Activated naive CD4-positive, alpha-beta T cell treated with anti-CD3 and anti-CD28 coated beads for 36 hours (primary cell): ENCODE measurements at regions of chr12 and their contacts with region 1.

Region 1: GRCh38 chr12:92208613-92209121 is 63.0 kb upstream of the BTG1 start:
- DNase-seq: peak; percentile 42
- H3K4me3 Mint-ChIP-seq: peak overlapping the region; percentile 66
- H3K27ac Mint-ChIP-seq: peak overlapping the region; percentile 86
- H3K4me1 Mint-ChIP-seq: peaks cover 45% of the 10 kb centered on the region
- H3K27me3 Mint-ChIP-seq: no peaks in the 10 kb centered on the region

Region 2: GRCh38 chr12:91577586-91578539 is 630.8 kb before region 1 on chr12:
- CTCF ChIA-PET with region 1: no interaction called
- intact Hi-C with region 1: loop called (anchors 1 kb)
- DNase-seq: no peak
- H3K4me3 Mint-ChIP-seq: peak overlapping the region; percentile 71
- H3K27ac Mint-ChIP-seq: peak overlapping the region; percentile 61
- H3K4me1 Mint-ChIP-seq: peaks cover 19% of the 10 kb centered on the region
- H3K27me3 Mint-ChIP-seq: no peaks in the 10 kb centered on the region

Region 3: DNA sequence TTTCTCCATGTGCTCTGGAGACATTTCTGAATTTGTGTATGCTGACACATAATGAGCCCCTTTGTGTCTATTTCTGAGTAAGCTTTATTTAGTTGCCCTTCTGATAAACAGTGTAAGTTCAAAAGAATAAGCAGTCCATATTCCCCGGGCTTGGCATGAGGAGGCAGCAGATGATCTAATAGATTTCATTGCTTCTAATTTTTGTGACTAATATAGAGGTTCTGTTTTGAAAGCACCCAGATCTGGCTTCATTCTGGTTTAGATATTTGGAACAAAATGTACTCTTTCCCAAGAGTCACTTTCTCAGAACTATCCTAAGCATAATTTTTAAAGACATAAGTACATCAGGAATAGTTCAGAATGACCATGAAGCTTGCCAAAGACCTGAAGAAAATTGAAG is 353.9 kb before region 1 on chr12:
- CTCF ChIA-PET with region 1: no interaction called
- intact Hi-C with region 1: loop called (anchors 5 kb)
- DNase-seq: no peak
- H3K4me3 Mint-ChIP-seq: no peak overlapping the region
- H3K27ac Mint-ChIP-seq: no peak overlapping the region
- H3K4me1 Mint-ChIP-seq: peaks cover 29% of the 10 kb centered on the region
- H3K27me3 Mint-ChIP-seq: no peaks in the 10 kb centered on the region

Region 4: DNA sequence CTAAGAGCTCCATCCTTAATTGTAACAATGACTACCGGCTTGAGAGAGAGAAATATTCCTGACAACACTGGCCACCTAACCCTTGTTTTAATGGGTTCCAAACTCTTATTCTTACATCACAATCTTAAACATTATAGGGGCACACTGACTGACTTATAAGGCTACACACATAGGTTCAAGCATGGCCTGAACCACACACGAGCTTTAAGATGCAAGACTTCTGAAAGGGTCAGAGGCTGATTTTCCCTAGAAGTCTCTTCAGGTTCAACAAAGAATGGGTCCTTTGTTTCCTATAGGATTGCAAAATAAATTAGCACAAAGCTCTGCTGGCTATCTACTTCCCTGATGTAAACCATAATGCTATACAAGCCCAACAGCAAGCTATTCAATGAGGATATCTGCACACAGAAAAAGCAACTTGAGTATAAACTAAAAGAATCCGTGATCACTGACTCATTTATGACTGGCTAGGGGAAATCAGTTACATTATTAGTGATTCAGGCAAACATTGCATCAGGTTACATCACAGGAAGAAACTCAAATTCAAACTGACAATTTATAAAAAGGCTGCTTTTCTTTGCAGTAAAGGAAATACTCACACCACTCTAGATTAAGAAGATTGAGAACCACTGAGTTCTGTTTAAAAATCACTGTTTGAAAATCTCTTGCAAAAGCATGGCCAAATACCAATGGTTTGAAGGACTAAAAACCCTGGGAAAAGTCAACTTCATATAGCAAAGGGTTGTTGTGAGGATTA is 71.5 kb before region 1 on chr12:
- CTCF ChIA-PET with region 1: interaction called, 3 read pairs
- intact Hi-C with region 1: loop called (anchors 1 kb)
- DNase-seq: no peak
- H3K4me3 Mint-ChIP-seq: peak overlapping the region; percentile 100
- H3K27ac Mint-ChIP-seq: peak overlapping the region; percentile 99
- H3K4me1 Mint-ChIP-seq: peaks cover 58% of the 10 kb centered on the region
- H3K27me3 Mint-ChIP-seq: no peaks in the 10 kb centered on the region

Region 5: DNA sequence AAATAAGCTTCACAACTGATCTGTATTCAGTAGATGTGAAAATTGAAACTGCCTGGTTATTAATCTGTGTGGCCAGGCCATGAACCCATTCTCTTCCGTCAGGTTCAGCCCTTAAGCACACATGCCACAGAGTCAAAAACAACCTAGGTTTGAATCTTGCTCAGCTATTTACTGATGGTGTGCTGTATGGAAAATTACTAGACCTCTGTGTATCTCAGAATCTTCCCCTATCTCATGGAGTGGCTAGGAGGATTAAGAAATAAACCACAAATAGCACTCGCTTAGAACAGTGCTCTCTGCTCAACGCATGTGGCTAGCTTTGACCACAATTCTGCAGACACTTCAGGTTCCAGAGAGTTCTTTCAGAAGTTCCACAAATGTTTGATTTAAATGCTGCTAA is 253.4 kb after region 1 on chr12:
- CTCF ChIA-PET with region 1: no interaction called
- intact Hi-C with region 1: no loop called
- DNase-seq: no peak
- H3K4me3 Mint-ChIP-seq: no peak overlapping the region
- H3K27ac Mint-ChIP-seq: no peak overlapping the region
- H3K4me1 Mint-ChIP-seq: peaks cover 41% of the 10 kb centered on the region
- H3K27me3 Mint-ChIP-seq: no peaks in the 10 kb centered on the region

Region 6: GRCh38 chr12:92485351-92486348 is 277.0 kb after region 1 on chr12:
- CTCF ChIA-PET with region 1: no interaction called
- intact Hi-C with region 1: no loop called
- DNase-seq: no peak
- H3K4me3 Mint-ChIP-seq: no peak overlapping the region
- H3K27ac Mint-ChIP-seq: peak overlapping the region; percentile 32
- H3K4me1 Mint-ChIP-seq: peaks cover 25% of the 10 kb centered on the region
- H3K27me3 Mint-ChIP-seq: no peaks in the 10 kb centered on the region

Region 7: GRCh38 chr12:92593734-92594402 is 385.2 kb after region 1 on chr12:
- CTCF ChIA-PET with region 1: interaction called, 4 read pairs
- intact Hi-C with region 1: loop called (anchors 1 kb)
- DNase-seq: peak; percentile 87
- H3K4me3 Mint-ChIP-seq: peak overlapping the region; percentile 55
- H3K27ac Mint-ChIP-seq: peak overlapping the region; percentile 96
- H3K4me1 Mint-ChIP-seq: peaks cover 78% of the 10 kb centered on the region
- H3K27me3 Mint-ChIP-seq: no peaks in the 10 kb centered on the region